Naive thymus-derived CD4-positive, alpha-beta T cell (primary cell): ENCODE measurements at regions of chr2 and their contacts with region 1.

Region 1: GRCh38 chr2:224520064-224520463 is 65.1 kb downstream of the CUL3 start:
- DNase-seq: peak in 2 of 9 donors; percentile 2 to 29
- ATAC-seq: peak; percentile 33
- H3K4me3 ChIP-seq: no peak overlapping the region
- H3K4me3 Mint-ChIP-seq: peak overlapping the region in 9 of 10 donors; percentile 11 to 64 (median 32)
- H3K27ac ChIP-seq: no peak overlapping the region
- H3K27ac Mint-ChIP-seq: peak overlapping the region in 7 of 9 donors; percentile 3 to 76 (median 23)
- H3K4me1 ChIP-seq: peaks cover 33 to 35% of the 10 kb centered on the region in 2 donors
- H3K4me1 Mint-ChIP-seq: peaks cover 56 to 72% (median 63%) of the 10 kb centered on the region in 7 donors
- H3K27me3 ChIP-seq: no peaks in the 10 kb centered on the region
- H3K27me3 Mint-ChIP-seq: no peaks in the 10 kb centered on the region

Region 2: DNA sequence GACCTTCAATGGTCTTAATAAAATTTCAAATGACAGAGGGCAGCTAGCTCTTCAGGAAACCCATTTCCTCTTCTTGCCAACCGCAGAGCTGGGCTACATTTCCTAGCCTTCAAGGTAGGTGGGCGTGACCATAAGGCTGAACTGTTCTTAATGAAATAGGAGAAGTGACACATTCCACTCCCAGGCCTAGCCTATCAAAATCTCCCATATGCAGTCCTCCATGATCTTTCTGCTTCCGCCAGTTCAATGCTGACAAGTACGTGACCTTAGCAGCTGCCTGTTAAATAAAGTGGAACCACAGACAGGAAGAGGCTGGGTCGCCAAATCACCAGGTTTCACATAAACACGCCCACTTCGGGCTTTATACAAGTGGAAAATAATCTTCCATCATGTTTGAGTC is 494.2 kb before region 1 on chr2:
- CTCF ChIA-PET with region 1: no interaction called
- POLR2A ChIA-PET with region 1: no interaction called
- intact Hi-C with region 1: loop called in 1 of 2 experiments (anchors 10 kb)
- DNase-seq: peak in 8 of 9 donors; percentile 47 to 78 (median 68)
- ATAC-seq: peak; percentile 93
- H3K4me3 ChIP-seq: no peak overlapping the region
- H3K4me3 Mint-ChIP-seq: peak overlapping the region; percentile 31 to 86 (median 60)
- H3K27ac ChIP-seq: peak overlapping the region; percentile 56
- H3K27ac Mint-ChIP-seq: peak overlapping the region; percentile 85 to 96 (median 92)
- H3K4me1 ChIP-seq: peaks cover 0 to 56% of the 10 kb centered on the region in 2 donors
- H3K4me1 Mint-ChIP-seq: peaks cover 37 to 86% (median 70%) of the 10 kb centered on the region in 7 donors
- H3K27me3 ChIP-seq: no peaks in the 10 kb centered on the region
- H3K27me3 Mint-ChIP-seq: no peaks in the 10 kb centered on the region

Region 3: DNA sequence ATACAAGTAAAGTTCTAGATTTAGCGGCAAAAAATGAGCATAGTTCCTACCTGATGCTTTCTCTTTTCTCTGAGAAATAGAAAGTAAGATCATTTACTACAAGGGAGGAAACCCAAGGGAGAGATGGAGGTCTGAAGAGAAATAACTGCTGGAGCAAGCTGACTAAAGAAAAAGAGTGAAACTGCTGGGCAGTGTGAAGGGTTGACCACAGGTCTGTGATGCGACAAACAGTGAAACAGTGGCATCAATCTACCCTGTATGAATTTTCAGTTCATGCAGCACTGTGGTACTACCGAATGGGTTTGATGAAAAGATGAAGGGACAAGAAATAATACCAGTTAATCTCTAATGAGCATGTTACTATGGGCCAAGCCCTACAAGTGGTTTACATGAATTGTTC is 12.9 kb after region 1 on chr2:
- CTCF ChIA-PET with region 1: interaction called, 4 read pairs
- POLR2A ChIA-PET with region 1: interaction called, 4 read pairs
- intact Hi-C with region 1: loop called in 1 of 2 experiments (anchors 1 kb)
- DNase-seq: no peak
- ATAC-seq: no peak
- H3K4me3 ChIP-seq: no peak overlapping the region
- H3K4me3 Mint-ChIP-seq: peak overlapping the region in 4 of 10 donors; percentile 1 to 23 (median 13)
- H3K27ac ChIP-seq: no peak overlapping the region
- H3K27ac Mint-ChIP-seq: peak overlapping the region in 8 of 9 donors; percentile 16 to 77 (median 40)
- H3K4me1 ChIP-seq: peaks cover 3 to 4% of the 10 kb centered on the region in 2 donors
- H3K4me1 Mint-ChIP-seq: peaks cover 33 to 75% (median 66%) of the 10 kb centered on the region in 7 donors
- H3K27me3 ChIP-seq: no peaks in the 10 kb centered on the region
- H3K27me3 Mint-ChIP-seq: no peaks in the 10 kb centered on the region

Region 4: GRCh38 chr2:224678634-224679263 is 158.7 kb after region 1 on chr2:
- CTCF ChIA-PET with region 1: no interaction called
- POLR2A ChIA-PET with region 1: no interaction called
- intact Hi-C with region 1: no loop called
- DNase-seq: no peak
- ATAC-seq: no peak
- H3K4me3 ChIP-seq: no peak overlapping the region
- H3K4me3 Mint-ChIP-seq: no peak overlapping the region
- H3K27ac ChIP-seq: no peak overlapping the region
- H3K27ac Mint-ChIP-seq: no peak overlapping the region
- H3K4me1 ChIP-seq: no peaks in the 10 kb centered on the region
- H3K4me1 Mint-ChIP-seq: no peaks in the 10 kb centered on the region
- H3K27me3 ChIP-seq: no peaks in the 10 kb centered on the region
- H3K27me3 Mint-ChIP-seq: peaks cover 0 to 2% (median 0%) of the 10 kb centered on the region in 5 donors

Region 5: DNA sequence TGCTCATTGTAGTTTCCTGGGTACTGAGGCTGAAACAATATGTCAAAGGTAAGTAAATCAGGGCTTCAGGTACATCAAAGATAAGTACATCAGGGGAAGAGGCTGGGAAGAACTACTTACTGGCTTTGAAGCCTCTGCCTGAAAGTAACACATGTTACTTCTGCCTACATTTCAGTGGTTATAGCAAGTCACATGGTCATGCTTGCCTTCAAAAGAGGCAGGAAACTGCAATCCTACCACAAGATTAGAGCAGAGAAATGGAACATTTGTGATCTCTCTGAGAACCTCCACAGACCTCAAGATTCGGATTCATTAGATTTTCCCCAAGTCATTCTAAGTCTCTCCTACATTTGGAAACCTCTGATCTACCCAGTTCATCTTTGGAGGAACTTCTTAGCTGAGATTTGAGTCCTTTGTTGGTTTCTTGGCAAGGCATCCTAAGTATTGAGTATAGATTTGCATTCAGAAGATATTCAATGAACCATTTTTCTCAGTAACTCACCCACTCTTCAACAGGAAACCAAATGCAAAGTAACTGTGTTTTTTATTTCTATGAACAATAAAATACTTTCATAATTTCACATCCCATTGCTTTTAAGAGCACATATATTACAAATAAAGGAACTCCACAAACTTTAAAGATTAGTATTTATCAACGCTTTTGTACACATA is 244.6 kb after region 1 on chr2:
- CTCF ChIA-PET with region 1: no interaction called
- POLR2A ChIA-PET with region 1: no interaction called
- intact Hi-C with region 1: no loop called
- DNase-seq: peak in 7 of 9 donors; percentile 39 to 72 (median 53)
- ATAC-seq: peak; percentile 88
- H3K4me3 ChIP-seq: no peak overlapping the region
- H3K4me3 Mint-ChIP-seq: peak overlapping the region; percentile 7 to 77 (median 38)
- H3K27ac ChIP-seq: peak overlapping the region; percentile 34
- H3K27ac Mint-ChIP-seq: peak overlapping the region; percentile 70 to 92 (median 76)
- H3K4me1 ChIP-seq: peaks cover 0 to 18% of the 10 kb centered on the region in 2 donors
- H3K4me1 Mint-ChIP-seq: peaks cover 20 to 69% (median 42%) of the 10 kb centered on the region in 7 donors
- H3K27me3 ChIP-seq: no peaks in the 10 kb centered on the region
- H3K27me3 Mint-ChIP-seq: no peaks in the 10 kb centered on the region

Region 6: GRCh38 chr2:224922142-224922727 is 402.2 kb after region 1 on chr2:
- CTCF ChIA-PET with region 1: no interaction called
- POLR2A ChIA-PET with region 1: no interaction called
- intact Hi-C with region 1: loop called in 1 of 2 experiments (anchors 10 kb)
- DNase-seq: no peak
- ATAC-seq: peak; percentile 55
- H3K4me3 ChIP-seq: no peak overlapping the region
- H3K4me3 Mint-ChIP-seq: peak overlapping the region in 2 of 10 donors; percentile 15 to 17
- H3K27ac ChIP-seq: peak overlapping the region; percentile 44
- H3K27ac Mint-ChIP-seq: peak overlapping the region; percentile 26 to 99 (median 82)
- H3K4me1 ChIP-seq: peaks cover 35 to 52% of the 10 kb centered on the region in 2 donors
- H3K4me1 Mint-ChIP-seq: peaks cover 36 to 55% (median 50%) of the 10 kb centered on the region in 7 donors
- H3K27me3 ChIP-seq: no peaks in the 10 kb centered on the region
- H3K27me3 Mint-ChIP-seq: no peaks in the 10 kb centered on the region

Region 7: DNA sequence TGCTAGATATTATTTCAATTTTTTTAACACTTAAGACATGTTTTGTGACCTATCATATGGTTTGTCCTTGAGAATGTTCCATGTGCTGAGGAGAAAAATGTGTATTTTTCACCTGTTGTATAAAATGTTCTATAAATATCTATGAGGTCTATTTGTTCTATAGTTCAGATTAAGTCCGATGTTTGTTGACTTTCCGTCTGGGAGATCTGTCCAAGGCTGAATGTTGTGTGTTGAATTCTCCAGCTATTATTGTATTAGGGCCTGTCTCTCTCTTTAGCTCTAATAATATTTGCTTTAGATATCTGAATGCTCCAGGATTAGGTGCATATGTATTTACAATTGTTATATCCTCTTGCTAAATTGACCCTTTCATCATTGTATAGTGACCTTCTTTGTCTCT is 1023.6 kb after region 1 on chr2:
- CTCF ChIA-PET with region 1: no interaction called
- POLR2A ChIA-PET with region 1: no interaction called
- intact Hi-C with region 1: no loop called
- DNase-seq: no peak
- ATAC-seq: no peak
- H3K4me3 ChIP-seq: no peak overlapping the region
- H3K4me3 Mint-ChIP-seq: no peak overlapping the region
- H3K27ac ChIP-seq: no peak overlapping the region
- H3K27ac Mint-ChIP-seq: no peak overlapping the region
- H3K4me1 ChIP-seq: no peaks in the 10 kb centered on the region
- H3K4me1 Mint-ChIP-seq: no peaks in the 10 kb centered on the region
- H3K27me3 ChIP-seq: no peaks in the 10 kb centered on the region
- H3K27me3 Mint-ChIP-seq: peaks cover 0 to 31% (median 14%) of the 10 kb centered on the region in 5 donors